ENCODE measurements at regions of chr5 and their contacts with region 1.

Region 1: DNA sequence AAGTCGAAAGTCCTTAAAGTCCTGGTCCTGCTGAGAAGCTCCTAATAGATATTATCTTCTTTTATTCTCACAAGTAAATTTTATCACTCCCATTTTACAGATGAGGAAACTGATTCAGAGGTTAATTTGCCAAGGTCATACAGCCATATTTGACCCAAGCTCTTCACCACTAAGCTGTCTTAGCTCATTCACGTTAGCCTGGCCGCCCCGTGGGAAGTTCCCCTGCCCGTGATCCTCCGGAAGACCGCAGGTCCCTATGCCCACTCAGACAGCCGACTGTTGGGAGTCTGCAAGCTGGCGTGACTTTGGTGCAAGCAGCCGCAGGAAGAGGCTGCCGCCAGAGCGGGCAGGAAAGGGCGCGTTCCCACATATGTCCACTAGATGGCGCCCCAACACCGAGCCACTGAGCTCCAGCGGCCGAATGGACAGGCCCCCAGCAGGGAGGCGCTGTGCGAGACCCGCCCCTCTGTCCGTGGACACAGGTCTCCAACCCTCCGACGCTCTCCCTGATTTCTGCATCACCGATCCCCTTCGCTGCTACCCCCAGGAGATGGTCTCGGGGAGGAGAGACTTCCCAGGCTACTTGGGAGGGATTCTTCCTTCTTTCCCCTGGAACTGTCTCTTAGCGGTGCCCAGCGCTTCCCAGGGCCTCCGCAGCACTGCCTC is 10.0 kb upstream of the ARAP3 start:
- DNase-seq: peak; percentile 85 to 90
- ATAC-seq: peak; percentile 83 to 96 (median 90)
- H3K4me3 ChIP-seq: peak overlapping the region in 8 of 10 donors; percentile 18 to 48 (median 40)
- H3K27ac ChIP-seq: peak overlapping the region in 1 of 10 donors; percentile 28
- H3K4me1 ChIP-seq: peaks cover 0 to 39% (median 20%) of the 10 kb centered on the region in 9 donors
- H3K27me3 ChIP-seq: no peaks in the 10 kb centered on the region
- CTCF ChIP-seq: peak; percentile 99 to 100 (median 99)

Region 2: GRCh38 chr5:141757402-141757801 is 65.4 kb after region 1 on chr5:
- intact Hi-C with region 1: loop called in 1 of 10 experiments (anchors 5 kb)
- DNase-seq: peak in 1 of 2 donors; percentile 23
- ATAC-seq: peak in 6 of 8 donors; percentile 23 to 58 (median 50)
- H3K4me3 ChIP-seq: no peak overlapping the region
- H3K27ac ChIP-seq: no peak overlapping the region
- H3K4me1 ChIP-seq: peaks cover 2 to 28% (median 14%) of the 10 kb centered on the region in 9 donors
- H3K27me3 ChIP-seq: peaks cover 0 to 49% (median 42%) of the 10 kb centered on the region in 7 donors
- CTCF ChIP-seq: peak in 8 of 9 donors; percentile 5 to 46 (median 34)

Region 3: DNA sequence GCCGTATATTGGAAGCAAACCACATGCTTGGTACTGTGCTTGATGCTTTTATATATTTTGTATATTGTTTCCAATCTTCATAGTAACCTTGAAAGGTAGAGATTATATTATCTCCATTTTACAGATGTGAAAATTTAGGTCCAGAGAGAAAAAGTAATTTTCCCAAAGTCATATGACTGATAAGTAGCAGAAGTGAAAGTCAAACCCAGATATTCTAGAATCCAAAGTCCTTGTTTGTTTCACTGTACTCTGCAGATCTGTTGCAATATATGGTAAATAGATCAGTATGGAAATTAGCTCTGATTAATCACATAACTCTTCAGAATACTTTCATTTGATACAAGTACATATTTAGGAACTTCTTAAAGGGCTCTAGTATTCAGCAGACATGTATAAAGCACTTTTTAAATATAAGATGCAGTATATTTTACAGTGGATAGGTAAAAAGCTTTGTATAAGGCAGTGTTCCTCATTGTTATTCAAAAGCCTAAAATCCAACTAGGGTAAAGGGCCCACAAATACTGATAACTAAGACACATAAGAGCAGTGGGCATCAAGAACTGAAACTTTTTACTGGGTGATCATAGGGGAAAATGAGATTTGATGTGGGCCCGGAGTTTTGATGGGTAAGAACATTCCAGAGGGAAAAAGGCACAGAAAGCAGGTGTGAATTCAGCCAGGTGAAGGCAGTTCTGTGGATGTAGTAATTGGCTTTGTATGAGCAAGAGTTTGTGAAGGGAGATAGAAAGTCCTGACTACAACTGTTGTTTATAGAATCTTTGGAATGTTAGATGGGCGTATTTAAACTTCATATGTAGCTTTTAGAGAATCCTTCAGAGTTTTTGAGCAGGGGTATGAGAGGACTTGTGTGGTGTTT is 441.6 kb after region 1 on chr5:
- intact Hi-C with region 1: loop called in 1 of 10 experiments (anchors 10 kb)
- DNase-seq: no peak
- ATAC-seq: no peak
- H3K4me3 ChIP-seq: no peak overlapping the region
- H3K27ac ChIP-seq: peak overlapping the region in 1 of 10 donors; percentile 34
- H3K4me1 ChIP-seq: peaks cover 0 to 31% (median 11%) of the 10 kb centered on the region in 9 donors
- H3K27me3 ChIP-seq: no peaks in the 10 kb centered on the region
- CTCF ChIP-seq: no peak

Region 4: GRCh38 chr5:142145106-142145900 is 453.3 kb after region 1 on chr5:
- intact Hi-C with region 1: loop called in 4 of 10 experiments (anchors 10 kb)
- DNase-seq: peak in 1 of 2 donors; percentile 80
- ATAC-seq: peak; percentile 71 to 91 (median 84)
- H3K4me3 ChIP-seq: no peak overlapping the region
- H3K27ac ChIP-seq: no peak overlapping the region
- H3K4me1 ChIP-seq: peaks cover 0 to 8% (median 0%) of the 10 kb centered on the region in 9 donors
- H3K27me3 ChIP-seq: no peaks in the 10 kb centered on the region
- CTCF ChIP-seq: peak; percentile 59 to 80 (median 72)

Measured in heart right ventricle (tissue), 16 donors.